ENCODE measurements at regions of chr13 and their contacts with region 1.

Region 1: GRCh38 chr13:36736119-36736726 is 62.4 kb downstream of the SERTM1 start:
- DNase-seq: peak in 1 of 2 donors; percentile 30
- ATAC-seq: no peak

Region 2: GRCh38 chr13:36420437-36420891 is 315.8 kb before region 1 on chr13:
- intact Hi-C with region 1: loop called in 1 of 2 experiments (anchors 10 kb)
- DNase-seq: peak in 1 of 2 donors; percentile 73
- ATAC-seq: peak; percentile 63